CD4-positive, alpha-beta T cell (primary cell): ENCODE measurements at regions of chr2 and their contacts with region 1.

Region 1: GRCh38 chr2:10043906-10044601 is 704 bp downstream of the KLF11 start:
- DNase-seq: peak; percentile 79 to 97 (median 88)
- ATAC-seq: peak; percentile 63
- H3K4me3 ChIP-seq: peak overlapping the region; percentile 52
- H3K4me3 Mint-ChIP-seq: peak overlapping the region; percentile 81
- H3K27ac ChIP-seq: peak overlapping the region; percentile 77 to 79
- H3K27ac Mint-ChIP-seq: peak overlapping the region; percentile 89
- H3K4me1 ChIP-seq: peaks cover 29% of the 10 kb centered on the region
- H3K4me1 Mint-ChIP-seq: peaks cover 31% of the 10 kb centered on the region
- H3K27me3 ChIP-seq: no peaks in the 10 kb centered on the region
- H3K27me3 Mint-ChIP-seq: no peaks in the 10 kb centered on the region
- CTCF ChIP-seq: no peak

Region 2: GRCh38 chr2:9003616-9004337 is 1040.3 kb before region 1 on chr2 and contains the start of gene MBOAT2:
- CTCF ChIA-PET with region 1: no interaction called
- POLR2A ChIA-PET with region 1: no interaction called
- intact Hi-C with region 1: loop called in 1 of 2 experiments (anchors 10 kb)
- DNase-seq: peak; percentile 56 to 91 (median 72)
- ATAC-seq: peak; percentile 85
- H3K4me3 ChIP-seq: peak within 1 kb of the TSS; percentile 74
- H3K4me3 Mint-ChIP-seq: peak within 1 kb of the TSS; percentile 91
- H3K27ac ChIP-seq: peak within 1 kb of the TSS in 1 of 2 donors; percentile 35
- H3K27ac Mint-ChIP-seq: peak within 1 kb of the TSS; percentile 82
- H3K4me1 ChIP-seq: peaks cover 15% of the 10 kb centered on the region
- H3K4me1 Mint-ChIP-seq: peaks cover 26% of the 10 kb centered on the region
- H3K27me3 ChIP-seq: no peaks in the 10 kb centered on the region
- H3K27me3 Mint-ChIP-seq: no peaks in the 10 kb centered on the region
- CTCF ChIP-seq: no peak
- total RNA-seq, gene MBOAT2: 1.9 to 2.0 TPM

Region 3: DNA sequence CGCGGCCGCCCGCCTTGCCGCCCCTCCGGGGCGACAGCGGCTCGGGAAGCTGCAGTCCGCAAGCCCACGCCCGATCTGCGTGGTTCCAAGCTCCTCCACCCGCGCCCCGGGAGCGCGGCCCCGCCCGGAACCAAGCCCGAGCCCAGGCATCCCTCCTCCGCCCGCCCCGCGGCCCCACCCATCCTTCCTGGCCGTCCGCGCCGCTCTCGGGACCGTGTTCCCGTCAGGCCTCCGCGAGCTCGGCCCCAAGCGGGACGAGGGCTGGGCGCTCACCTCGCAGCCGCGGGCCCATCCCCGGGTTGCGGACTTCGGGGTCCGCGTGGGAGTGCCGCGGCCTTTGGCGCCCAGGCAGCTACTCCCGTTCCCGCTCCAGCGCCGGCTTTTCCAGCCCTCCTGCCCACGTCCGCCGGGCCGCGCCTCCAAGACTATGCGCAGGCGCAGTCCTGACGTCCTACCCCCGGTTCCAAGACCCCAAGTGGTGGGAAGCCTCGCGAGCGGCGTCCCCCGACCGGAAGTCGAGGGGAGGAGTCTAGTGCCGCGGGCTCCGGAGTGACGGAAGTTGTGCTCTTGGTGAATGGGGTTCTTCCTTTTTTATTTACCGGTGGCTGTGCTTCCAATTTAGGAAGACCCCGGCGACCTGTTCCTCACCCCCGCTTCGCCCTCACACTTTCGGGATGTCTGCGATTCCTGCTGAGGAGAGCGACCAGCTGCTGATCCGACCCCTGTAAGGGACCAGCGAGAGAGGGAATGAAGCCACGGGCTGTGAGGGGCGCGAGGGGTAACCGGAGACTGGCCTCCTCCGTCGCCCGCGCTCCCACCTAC is 620.7 kb before region 1 on chr2 and contains the starts of genes CPSF3 and ITGB1BP1:
- CTCF ChIA-PET with region 1: no interaction called
- POLR2A ChIA-PET with region 1: interaction called, 3 read pairs
- intact Hi-C with region 1: loop called in 1 of 2 experiments (anchors 10 kb)
- DNase-seq: peak; percentile 87 to 98 (median 94)
- ATAC-seq: peak; percentile 84
- H3K4me3 ChIP-seq: peak within 1 kb of the TSS; percentile 99
- H3K4me3 Mint-ChIP-seq: peak within 1 kb of the TSS; percentile 94
- H3K27ac ChIP-seq: peak within 1 kb of the TSS; percentile 73 to 84
- H3K27ac Mint-ChIP-seq: no peak within 1 kb of the TSS
- H3K4me1 ChIP-seq: peaks cover 39% of the 10 kb centered on the region
- H3K4me1 Mint-ChIP-seq: peaks cover 35% of the 10 kb centered on the region
- H3K27me3 ChIP-seq: no peaks in the 10 kb centered on the region
- H3K27me3 Mint-ChIP-seq: no peaks in the 10 kb centered on the region
- CTCF ChIP-seq: no peak
- total RNA-seq, gene CPSF3: 13.2 to 13.8 TPM
- total RNA-seq, gene ITGB1BP1: 24.4 to 25.0 TPM

Region 4: GRCh38 chr2:9555297-9556141 is 488.5 kb before region 1 on chr2 and contains the start of gene ADAM17:
- CTCF ChIA-PET with region 1: no interaction called
- POLR2A ChIA-PET with region 1: interaction called, 12 read pairs
- intact Hi-C with region 1: loop called in 1 of 2 experiments (anchors 10 kb)
- DNase-seq: peak; percentile 60 to 93 (median 80)
- ATAC-seq: peak; percentile 86
- H3K4me3 ChIP-seq: peak within 1 kb of the TSS; percentile 95
- H3K4me3 Mint-ChIP-seq: peak within 1 kb of the TSS; percentile 95
- H3K27ac ChIP-seq: peak within 1 kb of the TSS; percentile 93 to 97
- H3K27ac Mint-ChIP-seq: peak within 1 kb of the TSS; percentile 86
- H3K4me1 ChIP-seq: peaks cover 29% of the 10 kb centered on the region
- H3K4me1 Mint-ChIP-seq: peaks cover 58% of the 10 kb centered on the region
- H3K27me3 ChIP-seq: no peaks in the 10 kb centered on the region
- H3K27me3 Mint-ChIP-seq: no peaks in the 10 kb centered on the region
- CTCF ChIP-seq: peak; percentile 15
- total RNA-seq, gene ADAM17: 21.4 to 21.6 TPM

Region 5: GRCh38 chr2:9799665-9800632 is 244.1 kb before region 1 on chr2:
- CTCF ChIA-PET with region 1: interaction called, 3 read pairs
- POLR2A ChIA-PET with region 1: no interaction called
- intact Hi-C with region 1: loop called in 1 of 2 experiments (anchors 1 kb)
- DNase-seq: peak; percentile 69 to 91 (median 82)
- ATAC-seq: peak; percentile 90
- H3K4me3 ChIP-seq: peak overlapping the region; percentile 28
- H3K4me3 Mint-ChIP-seq: peak overlapping the region; percentile 82
- H3K27ac ChIP-seq: peak overlapping the region; percentile 20 to 31
- H3K27ac Mint-ChIP-seq: no peak overlapping the region
- H3K4me1 ChIP-seq: peaks cover 46% of the 10 kb centered on the region
- H3K4me1 Mint-ChIP-seq: peaks cover 17% of the 10 kb centered on the region
- H3K27me3 ChIP-seq: no peaks in the 10 kb centered on the region
- H3K27me3 Mint-ChIP-seq: peaks cover 5% of the 10 kb centered on the region
- CTCF ChIP-seq: peak; percentile 97

Region 6: GRCh38 chr2:9951272-9951972 is 92.6 kb before region 1 on chr2 and contains the start of gene GRHL1:
- CTCF ChIA-PET with region 1: no interaction called
- POLR2A ChIA-PET with region 1: no interaction called
- intact Hi-C with region 1: loop called in 1 of 2 experiments (anchors 2 kb)
- DNase-seq: peak; percentile 78 to 98 (median 88)
- ATAC-seq: peak; percentile 95
- H3K4me3 ChIP-seq: peak within 1 kb of the TSS; percentile 52
- H3K4me3 Mint-ChIP-seq: peak within 1 kb of the TSS; percentile 94
- H3K27ac ChIP-seq: no peak within 1 kb of the TSS
- H3K27ac Mint-ChIP-seq: peak within 1 kb of the TSS; percentile 39
- H3K4me1 ChIP-seq: peaks cover 10% of the 10 kb centered on the region
- H3K4me1 Mint-ChIP-seq: peaks cover 4% of the 10 kb centered on the region
- H3K27me3 ChIP-seq: peaks cover 11 to 21% of the 10 kb centered on the region in 2 experiments
- H3K27me3 Mint-ChIP-seq: peaks cover 56% of the 10 kb centered on the region
- CTCF ChIP-seq: no peak
- total RNA-seq, gene GRHL1: 0.28 to 0.38 TPM

Region 7: DNA sequence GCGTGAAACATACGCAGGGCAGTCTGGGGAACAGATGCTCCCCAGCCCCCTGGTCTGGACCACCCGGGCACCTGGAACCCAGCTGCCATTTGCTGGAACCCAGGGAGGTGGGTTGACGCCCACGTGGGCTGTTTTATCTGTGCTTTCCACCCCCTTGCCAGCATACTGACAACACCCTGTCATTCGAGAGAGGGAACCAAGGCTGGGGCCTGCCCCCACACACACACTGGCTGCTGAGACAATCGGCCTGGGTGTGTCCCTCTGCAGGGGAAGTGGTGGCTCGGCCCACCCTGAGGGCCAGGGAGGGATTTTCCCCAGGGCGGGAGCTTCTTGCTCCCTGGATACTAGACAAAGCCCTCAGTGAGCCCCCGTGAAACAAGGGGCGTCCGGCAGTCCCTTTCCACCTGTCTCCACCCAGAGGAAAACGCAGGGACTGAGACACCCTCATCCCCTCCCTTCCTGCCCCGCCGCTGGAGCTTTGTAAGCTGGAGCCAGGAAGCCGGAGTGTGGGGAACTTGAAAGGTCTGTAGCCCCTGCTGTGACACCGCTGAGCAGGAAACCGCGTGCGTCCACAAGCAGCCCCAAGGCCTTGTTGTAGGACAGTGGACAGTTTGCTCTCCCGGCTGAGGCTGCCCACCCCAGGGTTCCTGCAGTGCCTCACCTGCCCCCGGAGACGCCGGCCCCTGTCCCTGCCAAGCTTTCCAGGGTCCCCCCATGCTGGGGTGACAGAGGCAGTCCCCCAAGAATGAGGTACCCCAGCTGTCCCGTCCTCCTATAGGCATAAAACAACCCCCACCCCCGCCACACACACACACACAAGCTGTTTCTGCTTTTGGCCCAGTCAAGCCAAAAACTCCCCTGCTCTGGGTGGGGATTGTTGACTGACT is 14.8 kb before region 1 on chr2:
- CTCF ChIA-PET with region 1: interaction called, 17 read pairs
- POLR2A ChIA-PET with region 1: interaction called, 17 read pairs
- intact Hi-C with region 1: no loop called
- DNase-seq: peak in 9 of 14 experiments; percentile 18 to 80 (median 42)
- ATAC-seq: peak; percentile 83
- H3K4me3 ChIP-seq: peak overlapping the region; percentile 46
- H3K4me3 Mint-ChIP-seq: no peak overlapping the region
- H3K27ac ChIP-seq: peak overlapping the region; percentile 43 to 59
- H3K27ac Mint-ChIP-seq: no peak overlapping the region
- H3K4me1 ChIP-seq: peaks cover 27% of the 10 kb centered on the region
- H3K4me1 Mint-ChIP-seq: peaks cover 18% of the 10 kb centered on the region
- H3K27me3 ChIP-seq: no peaks in the 10 kb centered on the region
- H3K27me3 Mint-ChIP-seq: no peaks in the 10 kb centered on the region
- CTCF ChIP-seq: no peak

Region 8: GRCh38 chr2:10216677-10217488 is 172.8 kb after region 1 on chr2:
- CTCF ChIA-PET with region 1: no interaction called
- POLR2A ChIA-PET with region 1: no interaction called
- intact Hi-C with region 1: no loop called
- DNase-seq: no peak
- ATAC-seq: no peak
- H3K4me3 ChIP-seq: no peak overlapping the region
- H3K4me3 Mint-ChIP-seq: no peak overlapping the region
- H3K27ac ChIP-seq: no peak overlapping the region
- H3K27ac Mint-ChIP-seq: no peak overlapping the region
- H3K4me1 ChIP-seq: no peaks in the 10 kb centered on the region
- H3K4me1 Mint-ChIP-seq: no peaks in the 10 kb centered on the region
- H3K27me3 ChIP-seq: no peaks in the 10 kb centered on the region
- H3K27me3 Mint-ChIP-seq: no peaks in the 10 kb centered on the region
- CTCF ChIP-seq: no peak